Astrocyte of the cerebellum (primary cell): ENCODE measurements at regions of chr19 and their contacts with region 1.

Region 1: DNA sequence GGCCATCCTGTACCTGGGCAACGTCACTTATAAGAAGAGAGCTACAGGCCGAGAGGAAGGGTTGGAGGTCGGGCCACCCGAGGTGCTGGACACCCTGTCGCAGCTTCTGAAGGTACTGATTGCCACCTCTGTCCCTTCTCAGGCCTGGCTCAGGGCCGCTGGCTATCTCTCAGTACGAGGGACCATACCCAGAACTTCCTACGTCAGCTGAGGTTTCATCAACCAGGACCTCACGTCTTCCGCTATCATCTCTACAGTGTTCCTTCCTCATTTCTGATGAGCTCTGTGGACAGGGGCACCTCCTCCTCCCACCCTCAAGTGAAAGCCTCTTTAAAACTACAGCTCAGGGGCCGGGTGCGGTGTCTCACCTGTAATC is 58.2 kb upstream of the USE1 start:
- DNase-seq: no peak
- H3K4me3 ChIP-seq: no peak overlapping the region
- CTCF ChIP-seq: no peak

Region 2: GRCh38 chr19:17097593-17098126 is 59.3 kb before region 1 on chr19:
- in situ Hi-C with region 1: no loop called
- DNase-seq: no peak
- H3K4me3 ChIP-seq: no peak overlapping the region
- CTCF ChIP-seq: no peak

Region 3: GRCh38 chr19:17245244-17245984 is 88.5 kb after region 1 on chr19 and contains the start of gene NR2F6:
- in situ Hi-C with region 1: loop called (anchors 10 kb)
- DNase-seq: no peak
- H3K4me3 ChIP-seq: peak within 1 kb of the TSS; percentile 79
- CTCF ChIP-seq: no peak

Region 4: GRCh38 chr19:17305517-17306284 is 148.8 kb after region 1 on chr19 and contains the start of gene MRPL34:
- in situ Hi-C with region 1: loop called (anchors 25 kb)
- DNase-seq: peak; percentile 96
- H3K4me3 ChIP-seq: peak within 1 kb of the TSS; percentile 81
- CTCF ChIP-seq: peak; percentile 75